HEK293T (cell line): ENCODE measurements at regions of chr2 and their contacts with region 1.

Region 1: GRCh38 chr2:44981136-44982108 is 27.8 kb downstream of the SIX2 start:
- DNase-seq: peak; percentile 84

Region 2: DNA sequence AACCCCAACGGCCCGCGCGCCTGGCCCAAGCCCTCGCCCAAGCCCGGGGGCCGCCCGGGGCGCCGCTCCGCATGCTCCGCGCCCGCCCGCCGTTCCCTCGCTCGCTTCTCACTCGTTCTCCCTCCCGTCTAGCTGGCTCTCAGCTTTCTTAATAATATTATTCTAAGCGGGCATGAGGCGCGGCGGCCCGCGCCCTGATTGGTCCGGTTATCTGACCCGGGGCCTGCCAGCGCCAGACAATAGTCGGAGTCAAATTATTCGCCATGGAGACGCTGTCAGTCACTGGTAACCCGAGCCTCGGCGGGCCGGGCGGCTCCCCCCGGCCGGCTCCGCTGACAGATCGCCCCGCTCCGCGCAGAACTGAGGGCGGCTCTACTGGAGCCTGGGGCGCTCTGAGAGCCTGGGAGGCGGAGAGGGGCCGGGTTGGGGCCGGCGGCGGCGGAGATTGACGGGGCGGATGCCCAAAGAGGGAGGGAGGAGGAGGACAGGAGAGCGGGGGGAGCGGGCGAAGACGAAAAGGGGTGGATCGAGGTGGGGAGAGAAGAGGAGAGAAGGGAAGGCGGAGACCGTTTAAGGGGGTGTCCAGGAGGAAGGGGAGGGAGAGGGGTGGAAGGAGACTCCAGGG is 28.0 kb after region 1 on chr2 and contains the start of gene SIX2:
- CTCF ChIA-PET with region 1: no interaction called
- POLR2A ChIA-PET with region 1: no interaction called
- DNase-seq: peak; percentile 94

Region 3: GRCh38 chr2:45119855-45120254 is 138.4 kb after region 1 on chr2:
- CTCF ChIA-PET with region 1: no interaction called
- POLR2A ChIA-PET with region 1: no interaction called
- DNase-seq: no peak

Region 4: GRCh38 chr2:45494269-45494977 is 513.0 kb after region 1 on chr2:
- CTCF ChIA-PET with region 1: interaction called, 21 read pairs
- POLR2A ChIA-PET with region 1: no interaction called
- DNase-seq: peak; percentile 47